ENCODE measurements at regions of chrX and their contacts with region 1.

Region 1: GRCh38 chrX:15854712-15855567 is at the start of gene AP1S2:
- DNase-seq: peak; percentile 87 to 97 (median 95)
- H3K4me3 ChIP-seq: peak within 1 kb of the TSS; percentile 72 to 81 (median 78)
- H3K4me3 Mint-ChIP-seq: peak within 1 kb of the TSS; percentile 83 to 94
- H3K27ac ChIP-seq: peak within 1 kb of the TSS; percentile 99 to 100
- H3K27ac Mint-ChIP-seq: peak within 1 kb of the TSS; percentile 99 to 100 (median 100)
- H3K4me1 ChIP-seq: peaks cover 26 to 68% of the 10 kb centered on the region in 2 donors
- H3K4me1 Mint-ChIP-seq: peaks cover 33% of the 10 kb centered on the region
- H3K27me3 ChIP-seq: peaks cover 0 to 42% of the 10 kb centered on the region in 2 donors
- H3K27me3 Mint-ChIP-seq: peaks cover 0 to 46% (median 1%) of the 10 kb centered on the region in 3 donors
- CTCF ChIP-seq: no peak
- polyA plus RNA-seq, gene AP1S2: 155 to 851 (median 806) TPM

Region 2: DNA sequence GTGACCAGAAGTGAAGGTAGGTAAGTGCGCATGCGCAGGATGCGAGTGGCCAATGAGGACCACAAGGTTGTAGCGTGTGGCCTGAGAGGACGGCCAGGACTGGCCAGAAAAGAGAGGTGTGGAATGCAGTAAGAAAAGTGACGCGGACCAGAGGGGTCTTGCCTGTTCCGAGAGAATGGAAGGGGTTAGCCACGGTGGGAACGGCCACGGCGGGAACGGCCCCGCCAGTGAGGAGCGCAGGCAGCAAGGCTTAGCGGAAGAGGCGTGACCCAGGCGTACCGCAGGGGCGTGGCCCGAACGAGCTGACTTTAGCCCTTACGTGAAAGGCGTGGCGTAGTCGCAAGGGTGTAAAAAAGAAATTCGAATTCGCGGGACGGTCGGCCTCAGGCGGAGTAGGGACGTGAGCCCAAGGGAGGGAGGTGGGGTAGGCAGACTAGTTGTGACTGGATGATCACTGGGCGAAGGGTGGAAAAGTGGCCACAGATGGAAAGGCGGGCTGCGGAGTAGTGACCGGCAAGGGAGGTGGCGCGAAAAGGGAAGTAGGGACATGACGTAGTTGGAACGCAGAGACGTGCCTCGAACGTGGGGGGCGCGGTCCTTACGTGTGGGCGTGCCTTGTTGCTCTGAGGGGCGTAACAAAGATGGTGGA is 180.0 kb before region 1 on chrX:
- intact Hi-C with region 1: loop called in 1 of 2 experiments (anchors 10 kb)
- DNase-seq: peak; percentile 91 to 98 (median 93)
- H3K4me3 ChIP-seq: peak overlapping the region; percentile 50 to 91 (median 87)
- H3K4me3 Mint-ChIP-seq: no peak overlapping the region
- H3K27ac ChIP-seq: peak overlapping the region; percentile 98
- H3K27ac Mint-ChIP-seq: no peak overlapping the region
- H3K4me1 ChIP-seq: peaks cover 47 to 59% of the 10 kb centered on the region in 2 donors
- H3K4me1 Mint-ChIP-seq: peaks cover 29% of the 10 kb centered on the region
- H3K27me3 ChIP-seq: peaks cover 0 to 17% of the 10 kb centered on the region in 2 donors
- H3K27me3 Mint-ChIP-seq: peaks cover 0 to 18% (median 5%) of the 10 kb centered on the region in 3 donors
- CTCF ChIP-seq: no peak

Region 3: DNA sequence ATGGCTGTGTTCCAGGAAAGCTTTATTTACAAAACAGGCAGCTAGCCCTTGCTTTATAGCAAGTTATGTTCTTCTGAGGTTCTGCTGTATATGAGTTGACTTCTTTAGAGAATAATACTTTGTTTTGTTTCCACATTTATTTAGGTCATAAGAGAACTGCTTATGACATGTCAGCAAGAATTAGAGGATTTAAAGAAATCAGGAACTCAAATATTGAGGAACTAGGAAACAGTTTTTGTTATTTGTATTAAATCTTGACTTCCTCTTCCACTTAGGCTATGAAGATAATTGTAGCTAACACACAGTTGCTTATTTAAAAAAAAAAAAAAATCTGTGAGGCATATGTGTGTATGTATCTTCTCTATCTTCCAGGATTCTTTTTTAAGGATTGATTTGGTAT is 50.4 kb before region 1 on chrX:
- intact Hi-C with region 1: loop called in 1 of 2 experiments (anchors 10 kb)
- DNase-seq: peak; percentile 51 to 73 (median 58)
- H3K4me3 ChIP-seq: peak overlapping the region in 1 of 3 experiments; percentile 65
- H3K4me3 Mint-ChIP-seq: peak overlapping the region; percentile 9 to 51
- H3K27ac ChIP-seq: peak overlapping the region; percentile 56 to 88
- H3K27ac Mint-ChIP-seq: peak overlapping the region; percentile 90 to 96 (median 91)
- H3K4me1 ChIP-seq: peaks cover 26 to 30% of the 10 kb centered on the region in 2 donors
- H3K4me1 Mint-ChIP-seq: peaks cover 20% of the 10 kb centered on the region
- H3K27me3 ChIP-seq: no peaks in the 10 kb centered on the region
- H3K27me3 Mint-ChIP-seq: peaks cover 0 to 4% (median 0%) of the 10 kb centered on the region in 3 donors
- CTCF ChIP-seq: no peak

Region 4: DNA sequence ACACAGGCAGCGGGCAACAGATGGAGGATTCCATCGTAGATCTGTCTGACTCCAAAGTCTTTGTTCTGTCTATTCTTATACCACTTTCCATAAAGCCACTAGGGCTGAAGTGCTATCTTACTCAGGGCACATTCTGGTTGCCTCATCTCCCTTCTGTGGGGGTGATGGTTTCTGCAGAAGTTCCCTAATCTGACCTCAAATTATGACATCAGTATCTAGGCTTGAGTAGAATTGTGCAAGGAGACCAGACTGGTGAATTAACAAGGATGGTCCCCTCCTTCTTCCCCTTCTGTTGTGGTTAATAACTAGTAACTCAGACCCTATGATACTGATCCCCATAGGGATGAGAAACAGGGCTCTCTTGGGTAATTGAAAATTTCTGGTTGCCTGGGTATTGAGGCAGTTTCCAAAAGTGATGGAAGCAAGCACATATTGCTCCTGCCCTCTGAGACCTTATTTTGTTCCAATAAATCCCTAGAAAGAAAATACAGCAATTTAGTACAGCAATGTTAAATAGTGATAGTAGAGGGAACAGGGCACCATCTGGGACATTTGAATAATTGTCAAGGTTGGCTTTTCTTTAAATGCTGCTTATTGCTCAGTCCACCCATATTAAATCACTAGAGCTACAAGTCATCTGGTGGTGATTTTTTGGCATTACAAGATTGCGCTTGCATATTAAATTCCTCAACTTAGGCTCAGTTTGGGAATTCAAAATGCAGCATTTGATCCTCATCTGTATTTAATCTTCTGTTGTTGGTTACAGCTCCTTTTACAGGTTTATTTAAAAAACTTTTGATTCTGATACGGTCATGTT is 57.0 kb after region 1 on chrX:
- intact Hi-C with region 1: loop called (anchors 10 kb)
- DNase-seq: peak; percentile 94 to 95 (median 95)
- H3K4me3 ChIP-seq: peak overlapping the region in 1 of 3 experiments; percentile 28
- H3K4me3 Mint-ChIP-seq: no peak overlapping the region
- H3K27ac ChIP-seq: peak overlapping the region; percentile 65 to 67
- H3K27ac Mint-ChIP-seq: peak overlapping the region; percentile 85 to 96 (median 92)
- H3K4me1 ChIP-seq: peaks cover 89 to 93% of the 10 kb centered on the region in 2 donors
- H3K4me1 Mint-ChIP-seq: peaks cover 64% of the 10 kb centered on the region
- H3K27me3 ChIP-seq: peaks cover 0 to 22% of the 10 kb centered on the region in 2 donors
- H3K27me3 Mint-ChIP-seq: peaks cover 0 to 28% (median 0%) of the 10 kb centered on the region in 3 donors
- CTCF ChIP-seq: no peak

Region 5: DNA sequence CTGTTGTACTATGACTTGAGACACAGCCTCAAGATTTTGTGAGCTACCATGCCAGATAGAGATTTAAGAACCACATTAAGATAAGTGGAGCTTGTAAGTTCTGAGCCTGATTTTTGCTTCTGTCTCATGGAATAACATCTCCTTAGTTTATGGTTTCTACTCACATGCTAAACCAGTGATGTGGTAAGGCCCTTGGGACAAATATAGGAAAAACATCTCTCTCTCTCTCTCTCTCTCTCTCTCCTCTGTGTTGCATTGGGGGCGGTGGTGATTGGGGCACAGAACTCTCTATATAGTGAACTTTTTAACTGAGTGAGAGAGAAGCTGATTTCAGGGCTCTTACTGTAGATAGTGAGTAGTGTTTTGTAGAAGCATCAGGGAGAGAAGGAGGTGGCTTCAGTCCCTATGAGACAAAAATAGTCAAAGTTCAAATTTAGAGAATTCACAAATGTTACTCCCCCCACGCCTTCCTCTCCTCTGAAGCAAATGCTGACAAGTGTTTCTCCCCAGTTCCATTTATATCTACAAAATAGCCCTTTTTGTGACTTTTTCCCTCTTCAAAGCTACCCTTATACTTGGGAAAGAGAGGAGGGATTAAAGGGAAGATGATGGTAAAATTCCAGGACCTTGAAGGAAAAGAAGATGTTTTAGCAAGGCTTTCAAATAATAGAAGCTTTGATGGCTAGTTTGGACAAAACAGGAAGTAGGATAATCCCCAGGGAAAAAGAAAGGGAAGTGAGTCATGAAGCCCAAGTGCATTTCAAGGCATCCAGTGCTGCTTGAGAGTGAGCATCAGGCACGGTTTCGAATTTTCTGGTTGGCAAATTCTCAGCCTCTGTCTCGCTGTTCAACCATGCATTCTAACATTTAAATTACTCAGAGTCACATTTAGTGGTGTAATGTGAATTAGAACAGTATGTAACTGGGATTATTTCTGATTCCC is 134.0 kb after region 1 on chrX:
- intact Hi-C with region 1: no loop called
- DNase-seq: no peak
- H3K4me3 ChIP-seq: no peak overlapping the region
- H3K4me3 Mint-ChIP-seq: no peak overlapping the region
- H3K27ac ChIP-seq: no peak overlapping the region
- H3K27ac Mint-ChIP-seq: no peak overlapping the region
- H3K4me1 ChIP-seq: no peaks in the 10 kb centered on the region
- H3K4me1 Mint-ChIP-seq: peaks cover 1% of the 10 kb centered on the region
- H3K27me3 ChIP-seq: peaks cover 0 to 44% of the 10 kb centered on the region in 2 donors
- H3K27me3 Mint-ChIP-seq: peaks cover 0 to 40% (median 0%) of the 10 kb centered on the region in 3 donors
- CTCF ChIP-seq: no peak

Region 6: DNA sequence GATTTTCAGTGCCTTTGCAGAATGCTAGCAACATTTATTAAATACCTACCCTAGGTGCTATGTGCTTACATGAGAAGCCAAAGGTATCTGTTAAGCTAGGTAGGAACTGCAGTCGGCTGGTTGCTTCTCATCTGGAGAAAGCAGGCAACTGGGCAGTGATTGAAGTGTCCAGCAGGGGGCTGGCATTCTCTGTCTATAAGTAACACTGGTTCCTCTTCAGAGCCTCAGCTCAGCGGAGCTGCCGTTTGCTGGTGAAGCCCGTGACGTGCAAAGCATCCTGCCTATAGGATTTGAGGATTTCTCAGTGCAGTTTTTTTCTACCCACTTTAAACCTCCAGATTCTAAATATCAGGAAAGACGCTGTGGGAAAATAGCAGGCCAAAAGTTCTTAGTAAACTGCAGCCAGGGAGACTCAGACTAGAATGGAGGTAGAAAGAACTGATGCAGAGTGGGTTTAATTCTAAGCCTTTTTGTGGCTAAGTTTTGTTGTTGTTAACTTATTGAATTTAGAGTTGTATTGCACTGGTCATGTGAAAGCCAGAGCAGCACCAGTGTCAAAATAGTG is 268.4 kb after region 1 on chrX and contains the start of gene GRPR:
- intact Hi-C with region 1: loop called in 1 of 2 experiments (anchors 10 kb)
- DNase-seq: peak; percentile 68 to 84 (median 81)
- H3K4me3 ChIP-seq: no peak within 1 kb of the TSS
- H3K4me3 Mint-ChIP-seq: peak within 1 kb of the TSS; percentile 39 to 54
- H3K27ac ChIP-seq: no peak within 1 kb of the TSS
- H3K27ac Mint-ChIP-seq: peak within 1 kb of the TSS in 2 of 7 donors; percentile 18 to 24
- H3K4me1 ChIP-seq: peaks cover 37% of the 10 kb centered on the region in 2 donors
- H3K4me1 Mint-ChIP-seq: peaks cover 31% of the 10 kb centered on the region
- H3K27me3 ChIP-seq: peaks cover 3 to 37% of the 10 kb centered on the region in 2 donors
- H3K27me3 Mint-ChIP-seq: peaks cover 2 to 39% (median 7%) of the 10 kb centered on the region in 3 donors
- CTCF ChIP-seq: peak; percentile 71
- polyA plus RNA-seq, gene GRPR: 0.35 to 0.55 (median 0.46) TPM

Measured in CD14-positive monocyte (primary cell).